Dorsolateral prefrontal cortex (tissue), 120 donors: ENCODE measurements at regions of chr5 and their contacts with region 1.

Region 1: DNA sequence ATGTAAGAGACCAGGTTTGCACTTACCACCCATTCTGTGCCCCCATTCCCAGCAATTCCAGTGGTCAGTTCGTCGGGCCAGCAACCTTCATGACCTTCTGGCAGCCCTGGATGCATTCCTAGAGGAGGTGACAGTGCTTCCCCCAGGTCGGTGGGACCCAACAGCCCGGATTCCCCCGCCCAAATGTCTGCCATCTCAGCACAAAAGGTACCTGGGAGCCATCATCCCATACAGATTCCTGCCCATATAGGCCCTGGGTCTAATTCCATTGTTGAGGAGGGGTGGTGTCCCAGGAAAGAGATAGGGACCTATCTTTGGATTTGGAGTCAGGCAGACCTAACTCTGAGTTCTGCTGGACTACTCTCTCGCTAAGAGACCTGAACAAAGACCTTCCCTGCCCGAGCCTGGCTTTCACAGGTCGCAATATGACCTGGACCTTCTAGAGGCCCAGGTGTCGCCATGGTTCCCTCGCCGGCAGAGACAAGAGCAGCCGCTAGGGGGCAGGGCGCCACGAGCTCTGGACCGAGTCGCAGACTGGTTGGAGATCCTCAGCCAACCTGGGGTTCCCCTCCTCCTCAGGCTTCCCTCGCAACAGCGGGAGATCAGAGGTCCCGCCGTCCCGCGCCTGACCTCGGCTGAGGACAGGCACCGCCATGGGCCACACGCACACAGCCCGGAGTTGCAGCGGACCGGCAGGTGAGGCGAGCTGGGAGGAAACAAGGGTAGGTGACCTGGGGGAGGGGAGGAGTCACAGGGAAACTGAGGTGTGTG is 3.1 kb downstream of the SLC4A9 start:
- DNase-seq: peak; percentile 68 to 83 (median 74)
- H3K4me3 ChIP-seq: peak overlapping the region in 55 of 59 donors; percentile 18 to 65 (median 47)
- H3K27ac ChIP-seq: no peak overlapping the region
- H3K27me3 ChIP-seq: no peaks in the 10 kb centered on the region
- CTCF ChIP-seq: peak; percentile 61 to 96 (median 89)

Region 2: DNA sequence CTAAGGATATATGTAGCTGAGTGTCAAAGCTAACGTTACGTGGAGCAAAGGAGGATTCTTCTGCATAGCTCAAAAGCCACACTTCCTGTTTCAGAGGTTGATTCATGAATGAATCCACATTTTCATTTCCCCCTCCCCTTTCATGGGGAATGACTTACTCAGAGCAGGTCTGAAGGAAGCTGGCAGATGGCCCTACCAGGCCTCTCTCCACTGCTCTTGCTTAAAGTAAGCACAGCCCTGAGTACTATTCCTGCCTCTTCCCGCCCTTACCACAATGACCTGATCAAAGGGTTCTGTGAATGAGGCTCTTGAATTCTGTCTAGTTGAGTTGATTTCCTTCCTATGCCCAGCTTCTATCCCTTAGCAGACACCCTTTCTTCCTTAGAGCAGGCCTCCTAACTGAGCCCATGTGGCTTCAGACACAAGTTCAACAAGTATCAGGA is 231.1 kb before region 1 on chr5:
- intact Hi-C with region 1: no loop called
- DNase-seq: no peak
- H3K4me3 ChIP-seq: no peak overlapping the region
- H3K27ac ChIP-seq: no peak overlapping the region
- H3K27me3 ChIP-seq: no peaks in the 10 kb centered on the region
- CTCF ChIP-seq: no peak

Region 3: GRCh38 chr5:140639148-140639979 is 276.3 kb after region 1 on chr5 and contains the start of gene TMCO6:
- intact Hi-C with region 1: loop called in 1 of 2 experiments (anchors 10 kb)
- DNase-seq: peak; percentile 94 to 98 (median 96)
- H3K4me3 ChIP-seq: peak within 1 kb of the TSS; percentile 51 to 96 (median 83)
- H3K27ac ChIP-seq: peak within 1 kb of the TSS; percentile 63 to 97 (median 90)
- H3K27me3 ChIP-seq: no peaks in the 10 kb centered on the region
- CTCF ChIP-seq: peak; percentile 35 to 86 (median 73)
- total RNA-seq, gene TMCO6: 5.4 to 18.1 (median 10.8) TPM

Region 4: GRCh38 chr5:140710899-140711552 is 348.0 kb after region 1 on chr5:
- intact Hi-C with region 1: loop called (anchors 5 to 10 kb)
- DNase-seq: peak; percentile 24 to 87 (median 74)
- H3K4me3 ChIP-seq: peak overlapping the region; percentile 17 to 74 (median 60)
- H3K27ac ChIP-seq: peak overlapping the region in 54 of 59 donors; percentile 19 to 94 (median 82)
- H3K27me3 ChIP-seq: no peaks in the 10 kb centered on the region
- CTCF ChIP-seq: peak in 4 of 56 donors; percentile 7 to 25 (median 10)

Region 5: GRCh38 chr5:140725799-140726471 is 362.9 kb after region 1 on chr5:
- intact Hi-C with region 1: loop called in 1 of 2 experiments (anchors 2 kb)
- DNase-seq: peak in 1 of 10 donors; percentile 53
- H3K4me3 ChIP-seq: peak overlapping the region in 3 of 59 donors; percentile 9 to 13 (median 11)
- H3K27ac ChIP-seq: no peak overlapping the region
- H3K27me3 ChIP-seq: peaks cover 0 to 3% (median 0%) of the 10 kb centered on the region in 45 donors
- CTCF ChIP-seq: no peak